ENCODE measurements at regions of chr2 and their contacts with region 1.

Region 1: GRCh38 chr2:33583194-33583938 is 15.7 kb downstream of the FAM98A start:
- DNase-seq: no peak
- ATAC-seq: peak; percentile 53
- H3K4me3 Mint-ChIP-seq: no peak overlapping the region
- H3K27ac Mint-ChIP-seq: no peak overlapping the region
- H3K4me1 Mint-ChIP-seq: peaks cover 13% of the 10 kb centered on the region
- H3K27me3 Mint-ChIP-seq: no peaks in the 10 kb centered on the region

Region 2: GRCh38 chr2:33599175-33599942 is 16.0 kb after region 1 on chr2 and contains the start of gene FAM98A:
- CTCF ChIA-PET with region 1: interaction called, 20 read pairs
- DNase-seq: peak; percentile 99
- ATAC-seq: peak; percentile 92
- H3K4me3 Mint-ChIP-seq: peak within 1 kb of the TSS; percentile 86
- H3K27ac Mint-ChIP-seq: peak within 1 kb of the TSS; percentile 85
- H3K4me1 Mint-ChIP-seq: peaks cover 26% of the 10 kb centered on the region
- H3K27me3 Mint-ChIP-seq: no peaks in the 10 kb centered on the region
- total RNA-seq, gene FAM98A: 36.1 to 51.7 TPM